ENCODE measurements at regions of chr17 and their contacts with region 1.

Region 1: DNA sequence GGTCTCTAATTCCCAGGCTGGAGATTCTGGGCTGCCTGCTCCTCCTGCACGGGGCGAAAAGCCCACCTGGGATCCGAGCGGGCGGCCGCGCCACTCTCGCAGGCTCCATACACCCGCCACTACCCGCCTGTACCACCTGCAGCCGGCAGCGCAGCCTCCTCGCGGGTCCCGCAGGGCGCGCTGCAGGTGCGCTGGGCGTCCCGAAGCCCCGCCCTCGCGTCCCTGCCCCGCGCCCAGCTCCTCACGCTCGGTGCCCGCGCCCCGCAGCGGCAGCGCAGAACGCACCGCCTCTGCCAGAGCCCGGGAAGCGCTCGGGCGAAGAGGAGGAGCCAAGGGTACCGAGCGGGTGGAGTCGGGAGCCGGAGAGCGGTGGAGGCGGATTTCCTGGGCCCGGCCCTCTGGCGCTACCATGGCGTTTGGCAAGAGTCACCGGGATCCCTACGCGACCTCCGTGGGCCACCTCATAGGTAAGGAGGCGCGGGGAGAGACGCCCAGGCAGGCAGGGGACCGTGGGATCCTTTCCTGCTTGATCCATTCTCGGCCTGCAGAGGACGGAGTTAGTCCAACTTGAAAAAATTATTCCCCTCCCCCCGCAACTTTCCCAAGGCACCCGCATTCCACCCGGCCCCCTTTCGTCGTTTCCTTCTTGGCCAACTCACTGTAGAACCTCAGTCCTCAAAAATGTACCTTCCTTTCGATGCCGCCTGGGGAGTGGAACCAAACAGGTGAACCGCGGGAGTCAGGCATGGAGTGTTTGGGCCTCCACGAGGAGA is at the start of gene TOM1L1:
- DNase-seq: peak; percentile 77
- H3K4me3 ChIP-seq: peak within 1 kb of the TSS; percentile 57 to 65 (median 61)
- H3K27ac ChIP-seq: peak within 1 kb of the TSS; percentile 38 to 68 (median 55)
- H3K4me1 ChIP-seq: peaks cover 3 to 19% (median 16%) of the 10 kb centered on the region in 4 donors
- H3K27me3 ChIP-seq: no peaks in the 10 kb centered on the region
- CTCF ChIP-seq: peak in 2 of 4 experiments; percentile 8 to 9
- EP300 ChIP-seq: no peak
- POLR2A ChIP-seq: no peak
- total RNA-seq, gene TOM1L1: 23.8 to 30.8 (median 28.8) TPM

Region 2: DNA sequence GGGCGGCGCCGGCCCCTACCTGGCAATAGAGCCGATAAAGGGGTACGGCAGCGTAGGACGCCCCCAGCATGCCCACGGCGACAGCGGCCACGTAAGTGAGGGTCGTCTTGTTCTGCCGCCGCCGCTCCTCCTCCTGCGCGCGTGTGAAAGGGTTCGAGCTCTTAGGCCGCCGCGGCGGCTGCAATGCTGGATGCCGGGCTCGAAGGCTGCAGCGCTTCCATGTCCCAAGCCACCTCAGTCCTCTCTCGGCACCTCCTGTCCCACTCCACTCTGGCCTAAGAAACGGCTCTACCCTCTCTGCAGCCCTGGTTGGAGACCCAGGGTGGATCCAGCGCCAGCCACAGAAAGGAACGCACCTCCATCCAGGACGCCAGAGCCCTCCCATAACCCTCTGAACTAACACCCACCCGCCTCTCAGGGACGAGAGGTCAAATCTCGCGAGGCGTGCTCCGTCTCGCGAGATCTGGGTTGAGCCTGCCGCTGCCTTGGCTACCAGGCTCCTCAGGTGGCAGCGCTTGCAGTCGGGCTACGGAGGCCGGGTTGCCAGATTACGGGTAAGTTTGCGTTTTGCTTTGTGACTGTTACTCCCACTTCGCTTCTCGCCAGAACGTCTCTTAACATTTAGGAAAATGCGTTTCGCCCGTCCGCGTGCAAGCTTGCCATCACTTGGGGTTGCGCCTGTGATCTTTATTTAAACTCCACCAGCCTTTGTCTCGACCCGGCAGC is 67.8 kb after region 1 on chr17 and contains the starts of genes COX11 and STXBP4:
- intact Hi-C with region 1: loop called (anchors 2 kb)
- DNase-seq: peak; percentile 97
- H3K4me3 ChIP-seq: peak within 1 kb of the TSS; percentile 84 to 95 (median 89)
- H3K27ac ChIP-seq: peak within 1 kb of the TSS; percentile 86 to 94 (median 91)
- H3K4me1 ChIP-seq: peaks cover 0 to 30% (median 26%) of the 10 kb centered on the region in 4 donors
- H3K27me3 ChIP-seq: no peaks in the 10 kb centered on the region
- CTCF ChIP-seq: peak in 2 of 4 experiments; percentile 46 to 55
- EP300 ChIP-seq: peak in 1 of 4 donors; percentile 57
- POLR2A ChIP-seq: peak; percentile 74 to 79
- total RNA-seq, gene COX11: 36.6 to 96.3 (median 55.2) TPM
- total RNA-seq, gene STXBP4: 15.0 to 25.2 (median 21.1) TPM

Measured in sigmoid colon (tissue), 7 donors.